OCI-LY7 (cell line): ENCODE measurements at regions of chr4 and their contacts with region 1.

Region 1: DNA sequence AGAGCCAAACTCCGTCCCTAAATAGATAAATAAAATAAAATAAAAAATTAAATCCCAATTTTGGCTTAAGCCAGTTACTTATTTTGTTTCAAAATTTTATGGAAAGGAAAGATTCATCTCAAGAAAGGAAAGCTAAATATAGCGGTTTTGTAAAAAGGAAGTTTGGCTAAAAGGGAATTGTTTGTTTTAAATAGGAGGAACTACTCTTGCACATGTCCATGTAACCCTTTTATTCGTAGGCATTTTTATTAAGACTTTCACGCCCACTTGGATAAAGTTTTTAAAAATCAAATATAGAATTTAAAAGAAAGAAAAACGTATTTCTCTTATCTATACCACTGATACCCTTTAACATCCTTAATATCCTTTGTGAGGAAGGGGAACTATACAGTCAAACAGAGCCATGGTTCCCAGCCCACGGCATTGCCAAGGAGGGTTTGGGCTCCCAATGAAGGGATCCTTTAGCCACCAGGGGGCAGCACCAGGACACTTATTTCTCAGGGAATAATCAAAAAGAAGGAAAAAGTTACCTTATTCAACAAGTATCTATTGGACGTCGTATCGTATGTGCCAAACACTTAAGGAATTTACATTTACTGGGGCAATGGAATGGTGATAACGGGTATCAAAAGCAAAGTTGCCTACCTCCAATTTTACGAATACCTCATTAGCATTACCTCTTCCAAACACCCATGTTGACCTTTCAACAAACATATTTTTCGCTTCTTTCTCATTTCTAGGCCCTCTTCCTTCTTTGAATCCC is 27.7 kb downstream of the CDKN2AIP start:
- DNase-seq: peak; percentile 78
- H3K4me3 ChIP-seq: no peak overlapping the region
- H3K27ac ChIP-seq: no peak overlapping the region
- H3K4me1 ChIP-seq: no peaks in the 10 kb centered on the region
- CTCF ChIP-seq: peak; percentile 97

Region 2: DNA sequence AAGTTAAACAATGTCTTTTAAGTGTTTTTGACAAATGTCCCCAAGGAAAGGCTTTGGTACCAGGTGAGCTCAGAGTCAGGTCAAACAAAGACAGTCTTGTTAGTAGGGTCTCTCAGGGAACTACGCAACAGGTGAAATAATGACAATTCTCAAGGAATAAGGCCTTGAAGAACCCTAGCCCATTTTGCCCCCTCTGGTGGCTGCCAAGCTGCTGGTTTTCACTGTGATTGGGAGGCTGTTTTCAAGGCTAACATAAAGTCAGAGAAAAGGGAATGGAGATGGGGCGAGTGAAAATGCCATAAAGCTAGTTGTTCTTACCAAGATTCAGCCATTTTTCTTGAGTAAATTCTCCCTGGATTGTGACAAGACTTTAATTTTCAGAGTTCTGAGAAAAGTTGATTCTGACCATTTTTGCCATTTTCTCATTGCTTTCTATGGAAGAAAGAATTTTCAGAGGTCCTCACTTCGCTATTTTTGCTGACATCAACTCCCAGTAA is 128.1 kb after region 1 on chr4:
- CTCF ChIA-PET with region 1: no interaction called
- POLR2A ChIA-PET with region 1: no interaction called
- intact Hi-C with region 1: loop called (anchors 1 kb)
- DNase-seq: peak; percentile 21
- H3K4me3 ChIP-seq: no peak overlapping the region
- H3K27ac ChIP-seq: no peak overlapping the region
- H3K4me1 ChIP-seq: peaks cover 7% of the 10 kb centered on the region
- CTCF ChIP-seq: peak; percentile 66

Region 3: DNA sequence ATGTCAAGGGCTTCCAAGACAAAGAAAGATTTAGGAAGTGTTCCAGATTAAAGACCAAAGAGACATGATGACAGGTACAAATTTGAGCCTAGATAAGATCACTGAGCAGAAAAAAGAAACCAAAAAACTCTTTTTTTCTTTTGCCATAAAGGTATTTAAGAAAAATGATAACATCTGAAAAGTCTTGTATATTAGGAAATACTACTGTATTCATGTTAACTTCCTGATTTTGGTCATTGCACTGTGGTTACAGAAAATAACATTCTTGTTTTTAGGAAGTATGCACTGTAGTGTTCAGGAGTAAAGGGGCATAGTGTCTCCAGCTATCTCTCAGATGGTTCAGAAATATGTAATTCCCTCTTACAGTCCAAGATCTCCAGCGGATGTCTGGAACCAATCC is 149.7 kb after region 1 on chr4:
- CTCF ChIA-PET with region 1: no interaction called
- POLR2A ChIA-PET with region 1: no interaction called
- intact Hi-C with region 1: loop called (anchors 5 kb)
- DNase-seq: no peak
- H3K4me3 ChIP-seq: no peak overlapping the region
- H3K27ac ChIP-seq: no peak overlapping the region
- H3K4me1 ChIP-seq: no peaks in the 10 kb centered on the region
- CTCF ChIP-seq: no peak

Region 4: DNA sequence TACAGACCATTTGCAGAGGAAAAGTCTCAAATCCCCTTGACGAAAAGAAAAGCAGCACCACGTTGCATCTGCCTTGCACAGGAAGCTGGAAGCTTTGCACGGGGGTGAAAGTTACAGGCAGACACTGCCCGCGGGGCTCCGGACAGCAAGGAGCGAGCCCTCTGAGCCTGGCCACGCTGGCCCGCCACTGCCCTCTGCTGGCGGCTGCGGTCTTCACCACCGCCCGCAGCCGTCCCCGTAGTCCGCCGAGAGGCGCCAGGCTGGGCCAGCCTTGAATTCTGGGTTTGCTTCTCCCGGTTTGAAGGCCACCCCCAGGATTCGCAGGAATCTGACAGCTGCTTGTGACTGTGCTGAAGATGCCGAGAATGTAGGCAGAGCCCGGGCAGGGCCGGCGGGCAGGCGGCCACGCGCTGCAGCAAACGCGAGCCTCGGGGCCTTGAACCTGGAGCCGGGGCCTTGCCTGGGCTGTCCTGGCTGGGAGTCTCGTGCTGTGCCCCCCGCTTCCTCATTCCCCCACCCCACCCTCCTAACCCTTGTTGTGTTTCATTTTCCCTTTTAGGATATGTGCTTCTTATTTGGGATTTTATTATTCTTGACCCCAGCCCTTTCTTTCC is 696.4 kb after region 1 on chr4:
- CTCF ChIA-PET with region 1: no interaction called
- POLR2A ChIA-PET with region 1: no interaction called
- intact Hi-C with region 1: loop called (anchors 10 kb)
- DNase-seq: peak; percentile 46
- H3K4me3 ChIP-seq: no peak overlapping the region
- H3K27ac ChIP-seq: no peak overlapping the region
- H3K4me1 ChIP-seq: no peaks in the 10 kb centered on the region
- CTCF ChIP-seq: peak; percentile 87